ENCODE measurements at regions of chr11 and their contacts with region 1.

Region 1: DNA sequence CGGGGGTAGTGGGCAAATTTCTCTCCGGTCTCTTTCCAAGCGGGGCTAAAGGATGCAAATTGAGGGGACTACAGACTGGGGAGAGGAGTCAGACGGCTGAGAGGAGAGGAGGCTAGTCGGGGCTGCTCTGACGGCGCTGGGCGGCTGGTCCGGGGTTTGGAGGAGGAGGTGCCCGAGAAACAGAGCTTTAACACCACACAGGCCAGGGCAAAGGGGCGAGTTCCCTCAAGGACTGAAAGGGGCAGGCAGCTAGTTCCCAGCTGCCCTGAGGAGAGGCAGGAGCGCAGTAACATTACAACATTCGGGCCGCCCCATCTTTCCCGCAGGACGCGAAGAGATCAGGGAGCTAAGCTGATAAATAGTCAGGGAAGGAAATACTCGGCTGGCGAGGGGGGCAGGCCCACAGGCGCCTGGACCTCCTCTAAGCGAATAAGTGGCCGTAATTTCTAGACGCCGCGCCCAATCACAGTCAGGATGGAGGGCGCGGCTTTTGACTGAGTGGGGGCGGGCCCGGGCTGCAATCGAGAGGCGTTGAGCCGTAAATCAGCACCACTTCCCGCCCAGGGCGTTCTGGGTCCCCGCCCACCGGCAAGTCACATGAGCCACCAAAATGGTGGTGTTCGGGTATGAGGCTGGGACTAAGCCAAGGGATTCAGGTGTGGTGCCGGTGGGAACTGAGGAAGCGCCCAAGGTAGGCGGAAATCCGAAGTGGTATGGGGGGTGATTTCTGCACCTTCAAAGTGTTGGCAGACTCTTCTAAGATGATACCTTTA is at the start of gene TMEM126B:
- H3K4me3 ChIP-seq: peak within 1 kb of the TSS; percentile 79
- H3K27ac ChIP-seq: peak within 1 kb of the TSS; percentile 55
- H3K4me1 ChIP-seq: no peaks in the 10 kb centered on the region; the same call in 1 of the 2 replicates
- CTCF ChIP-seq: no peak

Region 2: DNA sequence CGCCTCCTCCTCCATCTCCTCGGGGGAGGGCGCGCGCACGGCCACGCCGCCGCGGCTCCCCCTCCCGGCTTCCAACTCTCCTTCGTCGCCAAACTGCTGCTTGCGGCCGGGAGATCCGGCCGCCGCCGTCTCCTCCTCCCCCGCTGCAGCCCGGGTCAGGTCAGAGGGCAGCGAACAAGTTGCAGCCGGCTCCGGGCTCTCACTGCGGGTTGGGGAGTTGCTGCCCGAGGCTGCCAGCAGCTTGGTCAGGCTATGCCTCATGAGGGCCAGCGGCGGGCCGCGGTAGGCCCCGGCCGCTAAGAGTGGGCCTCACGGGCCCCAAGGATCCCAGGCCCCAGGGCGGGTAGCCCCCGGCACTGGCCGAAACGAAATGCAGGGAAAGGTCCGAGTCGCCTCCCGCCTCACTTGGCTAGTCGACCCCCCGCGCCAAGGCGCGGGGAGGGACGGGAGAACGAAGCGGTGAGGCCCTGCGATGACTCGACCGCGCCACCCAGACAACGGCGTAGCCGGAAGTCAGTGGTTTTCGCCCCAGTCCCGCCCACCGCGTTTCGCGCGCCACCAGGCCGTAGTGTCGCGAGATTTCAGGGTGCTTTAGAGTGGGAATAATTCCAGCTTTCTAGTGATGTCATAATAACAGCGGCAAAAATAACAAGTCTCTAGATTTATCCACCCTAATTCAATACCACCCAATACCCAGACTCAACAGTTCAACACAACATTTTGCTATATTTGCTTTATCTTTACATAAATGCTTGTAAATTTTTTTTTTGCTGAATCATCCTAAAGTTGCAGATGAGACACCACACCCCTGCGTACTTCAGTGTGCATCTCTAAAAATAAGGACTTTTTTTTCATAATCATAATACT is 36.7 kb after region 1 on chr11 and contains the start of gene CREBZF:
- CTCF ChIA-PET with region 1: no interaction called
- POLR2A ChIA-PET with region 1: interaction called, 16 read pairs
- H3K4me3 ChIP-seq: peak within 1 kb of the TSS; percentile 91
- H3K27ac ChIP-seq: peak within 1 kb of the TSS; percentile 94
- H3K4me1 ChIP-seq: no peaks in the 10 kb centered on the region
- CTCF ChIP-seq: no peak

Measured in HEK293 (cell line).